PC-9 (cell line): ENCODE measurements at regions of chr6 and their contacts with region 1.

Region 1: GRCh38 chr6:26457806-26458688 is at the start of gene BTN2A1:
- DNase-seq: peak; percentile 71 to 85
- H3K4me3 ChIP-seq: peak within 1 kb of the TSS; percentile 72
- H3K27ac ChIP-seq: peak within 1 kb of the TSS; percentile 70
- H3K4me1 ChIP-seq: peaks cover 6% of the 10 kb centered on the region
- H3K27me3 ChIP-seq: no peaks in the 10 kb centered on the region
- CTCF ChIP-seq: no peak
- total RNA-seq, gene BTN2A1: 19.5 and 23.4 TPM in 2 replicates

Region 2: DNA sequence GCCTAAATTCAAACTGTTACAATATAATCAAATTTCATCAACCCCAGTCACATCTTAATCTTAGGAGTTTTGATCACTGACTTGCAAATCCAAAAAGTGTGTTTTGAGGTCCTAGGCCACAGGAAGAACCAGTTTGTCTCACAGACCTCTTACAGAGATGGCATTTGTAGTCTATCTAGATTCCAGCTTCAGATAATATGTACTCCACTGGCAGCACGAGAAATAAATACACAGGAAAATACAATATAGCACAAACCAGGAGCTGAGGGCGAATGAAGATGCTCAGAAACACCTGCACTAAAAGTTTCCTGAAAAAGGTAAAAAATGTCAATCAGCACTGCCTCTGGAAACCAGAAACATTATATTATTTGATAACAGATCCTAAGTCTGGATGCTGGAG is 18.4 kb before region 1 on chr6:
- CTCF ChIA-PET with region 1: no interaction called
- POLR2A ChIA-PET with region 1: no interaction called
- intact Hi-C with region 1: loop called (anchors 1 kb)
- DNase-seq: no peak
- H3K4me3 ChIP-seq: peak overlapping the region; percentile 67
- H3K27ac ChIP-seq: peak overlapping the region; percentile 39
- H3K4me1 ChIP-seq: peaks cover 8% of the 10 kb centered on the region
- H3K27me3 ChIP-seq: no peaks in the 10 kb centered on the region
- CTCF ChIP-seq: no peak